ENCODE measurements at regions of chr11 and their contacts with region 1.

Region 1: DNA sequence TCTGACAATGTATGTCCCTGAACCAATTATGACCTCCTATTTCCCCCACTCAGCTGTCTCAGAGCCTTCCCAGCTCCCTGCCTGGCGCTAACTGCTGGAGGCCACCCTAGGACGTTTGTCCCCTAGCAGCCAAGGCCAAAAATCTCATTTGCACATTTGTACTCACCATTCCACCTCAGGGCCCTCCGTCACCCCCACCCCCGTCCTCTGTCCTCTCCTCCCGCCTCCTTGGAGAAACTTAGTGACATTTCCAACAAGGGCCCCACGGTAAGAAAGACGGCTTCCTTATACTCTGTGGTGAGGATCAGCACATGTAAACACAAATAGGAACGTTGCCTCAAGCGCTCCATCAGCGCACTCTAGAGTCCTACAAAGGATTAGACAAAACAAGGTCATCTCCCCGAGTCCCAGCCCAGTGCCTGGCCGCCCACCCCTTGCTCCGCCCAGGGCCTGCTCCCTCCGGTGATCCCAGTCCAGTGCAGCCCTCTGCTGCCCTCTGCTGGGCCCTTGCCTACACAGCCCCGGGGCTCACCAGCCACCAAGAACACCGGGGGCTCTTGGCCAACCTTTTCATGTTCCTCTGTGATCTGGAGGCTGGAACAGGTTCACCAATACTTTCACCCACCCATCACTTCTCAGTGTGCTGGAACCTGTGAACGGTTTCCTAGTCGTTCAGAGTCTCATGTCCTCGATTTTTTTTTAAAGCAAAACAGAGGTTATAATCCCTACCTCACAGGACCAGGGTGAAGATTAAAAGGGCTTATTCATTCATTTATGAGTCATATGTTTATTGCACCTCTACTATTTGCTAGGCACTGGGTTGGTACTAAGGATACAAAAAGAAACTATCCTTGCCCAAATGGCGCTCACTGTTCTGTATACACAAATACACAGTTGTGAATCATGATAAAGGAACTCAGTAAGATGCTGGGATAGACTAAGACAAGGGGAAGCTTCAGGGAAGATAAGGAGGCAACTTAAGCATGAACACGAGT is 15.3 kb upstream of the CTR9 start:
- DNase-seq: peak; percentile 99

Region 2: GRCh38 chr11:10405855-10406592 is 329.8 kb before region 1 on chr11:
- intact Hi-C with region 1: loop called (anchors 2 to 5 kb)
- DNase-seq: peak; percentile 85

Region 3: DNA sequence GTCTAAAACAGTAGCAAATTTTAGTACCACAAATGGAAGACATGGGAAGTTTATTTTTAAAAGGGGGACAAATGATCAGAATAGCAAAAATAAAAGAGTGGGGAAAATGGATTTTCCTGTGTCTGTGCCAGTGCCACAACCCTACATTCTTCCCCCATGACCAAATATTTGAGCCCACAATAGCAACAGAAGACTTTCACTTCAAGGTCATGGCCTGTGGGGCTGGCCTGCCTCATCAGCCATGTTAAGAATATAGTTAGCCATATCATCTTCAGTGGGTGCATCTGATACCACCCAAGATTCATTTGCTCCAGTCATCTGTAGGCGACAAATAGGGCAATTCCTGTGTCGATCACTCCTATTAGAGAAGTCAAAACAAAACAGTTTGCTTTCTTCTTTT is 221.1 kb before region 1 on chr11:
- intact Hi-C with region 1: loop called in 1 of 2 experiments (anchors 5 kb)
- DNase-seq: no peak

Region 4: GRCh38 chr11:10641177-10641911 is 94.4 kb before region 1 on chr11:
- intact Hi-C with region 1: loop called in 1 of 2 experiments (anchors 10 kb)
- DNase-seq: no peak

Region 5: DNA sequence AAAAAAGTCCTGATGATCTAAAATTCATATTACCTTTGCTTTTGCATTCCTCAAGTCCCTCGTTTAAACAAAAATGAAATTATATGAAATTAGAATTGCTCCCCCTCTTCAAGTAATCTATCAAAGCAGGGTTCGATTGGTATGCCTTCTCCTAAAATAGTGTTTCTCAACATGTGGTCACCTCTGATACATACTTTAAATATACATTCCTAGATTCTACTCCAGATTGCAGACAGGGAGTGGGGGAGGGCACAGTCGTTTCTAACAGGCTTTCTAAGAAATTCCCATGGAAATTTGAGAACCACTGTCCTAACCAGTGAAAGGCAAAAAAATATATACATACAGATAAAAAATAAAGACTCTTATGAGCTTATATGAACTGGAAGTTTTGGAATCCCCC is 19.7 kb before region 1 on chr11:
- intact Hi-C with region 1: no loop called
- DNase-seq: no peak